ENCODE measurements at regions of chr19 and their contacts with region 1.

Region 1: GRCh38 chr19:6626764-6627163 is 35.8 kb upstream of the CD70 start:
- DNase-seq: no peak
- ATAC-seq: no peak

Region 2: GRCh38 chr19:5627395-5627904 is 999.3 kb before region 1 on chr19:
- intact Hi-C with region 1: no loop called
- DNase-seq: peak; percentile 76
- ATAC-seq: no peak

Region 3: GRCh38 chr19:6862673-6863078 is 235.9 kb after region 1 on chr19:
- intact Hi-C with region 1: loop called (anchors 10 kb)
- DNase-seq: peak; percentile 87
- ATAC-seq: peak; percentile 95